Naive thymus-derived CD4-positive, alpha-beta T cell (primary cell): ENCODE measurements at regions of chr12 and their contacts with region 1.

Region 1: GRCh38 chr12:110449799-110450497 is at the start of gene ARPC3:
- DNase-seq: peak; percentile 86 to 95 (median 94)
- ATAC-seq: peak; percentile 98
- H3K4me3 ChIP-seq: peak within 1 kb of the TSS; percentile 95
- H3K4me3 Mint-ChIP-seq: peak within 1 kb of the TSS; percentile 90 to 100 (median 99)
- H3K27ac ChIP-seq: peak within 1 kb of the TSS; percentile 93
- H3K27ac Mint-ChIP-seq: peak within 1 kb of the TSS; percentile 94 to 100 (median 99)
- H3K4me1 ChIP-seq: peaks cover 20 to 22% of the 10 kb centered on the region in 2 donors
- H3K4me1 Mint-ChIP-seq: peaks cover 31 to 51% (median 44%) of the 10 kb centered on the region in 7 donors
- H3K27me3 ChIP-seq: no peaks in the 10 kb centered on the region
- H3K27me3 Mint-ChIP-seq: peaks cover 0 to 3% (median 0%) of the 10 kb centered on the region in 5 donors
- total RNA-seq, gene ARPC3: 166 to 381 (median 187) TPM

Region 2: GRCh38 chr12:109713187-109713984 is 736.6 kb before region 1 on chr12 and contains the start of gene FAM222A:
- CTCF ChIA-PET with region 1: no interaction called
- POLR2A ChIA-PET with region 1: no interaction called
- intact Hi-C with region 1: loop called in 1 of 2 experiments (anchors 5 kb)
- DNase-seq: peak; percentile 94 to 99 (median 98)
- ATAC-seq: peak; percentile 94
- H3K4me3 ChIP-seq: peak within 1 kb of the TSS; percentile 41
- H3K4me3 Mint-ChIP-seq: peak within 1 kb of the TSS; percentile 57 to 81 (median 72)
- H3K27ac ChIP-seq: peak within 1 kb of the TSS; percentile 55
- H3K27ac Mint-ChIP-seq: peak within 1 kb of the TSS in 1 of 9 donors; percentile 48
- H3K4me1 ChIP-seq: peaks cover 3 to 11% of the 10 kb centered on the region in 2 donors
- H3K4me1 Mint-ChIP-seq: peaks cover 0 to 4% (median 0%) of the 10 kb centered on the region in 7 donors
- H3K27me3 ChIP-seq: peaks cover 0 to 6% of the 10 kb centered on the region in 2 donors
- H3K27me3 Mint-ChIP-seq: peaks cover 29 to 65% (median 30%) of the 10 kb centered on the region in 5 donors
- total RNA-seq, gene FAM222A: 0.24 to 1.6 (median 0.80) TPM

Region 3: GRCh38 chr12:110088936-110089335 is 361.0 kb before region 1 on chr12:
- CTCF ChIA-PET with region 1: no interaction called
- POLR2A ChIA-PET with region 1: no interaction called
- intact Hi-C with region 1: no loop called
- DNase-seq: no peak
- ATAC-seq: peak; percentile 63
- H3K4me3 ChIP-seq: no peak overlapping the region
- H3K4me3 Mint-ChIP-seq: no peak overlapping the region
- H3K27ac ChIP-seq: no peak overlapping the region
- H3K27ac Mint-ChIP-seq: no peak overlapping the region
- H3K4me1 ChIP-seq: no peaks in the 10 kb centered on the region
- H3K4me1 Mint-ChIP-seq: peaks cover 0 to 9% (median 0%) of the 10 kb centered on the region in 7 donors
- H3K27me3 ChIP-seq: no peaks in the 10 kb centered on the region
- H3K27me3 Mint-ChIP-seq: peaks cover 0 to 63% (median 6%) of the 10 kb centered on the region in 5 donors

Region 4: DNA sequence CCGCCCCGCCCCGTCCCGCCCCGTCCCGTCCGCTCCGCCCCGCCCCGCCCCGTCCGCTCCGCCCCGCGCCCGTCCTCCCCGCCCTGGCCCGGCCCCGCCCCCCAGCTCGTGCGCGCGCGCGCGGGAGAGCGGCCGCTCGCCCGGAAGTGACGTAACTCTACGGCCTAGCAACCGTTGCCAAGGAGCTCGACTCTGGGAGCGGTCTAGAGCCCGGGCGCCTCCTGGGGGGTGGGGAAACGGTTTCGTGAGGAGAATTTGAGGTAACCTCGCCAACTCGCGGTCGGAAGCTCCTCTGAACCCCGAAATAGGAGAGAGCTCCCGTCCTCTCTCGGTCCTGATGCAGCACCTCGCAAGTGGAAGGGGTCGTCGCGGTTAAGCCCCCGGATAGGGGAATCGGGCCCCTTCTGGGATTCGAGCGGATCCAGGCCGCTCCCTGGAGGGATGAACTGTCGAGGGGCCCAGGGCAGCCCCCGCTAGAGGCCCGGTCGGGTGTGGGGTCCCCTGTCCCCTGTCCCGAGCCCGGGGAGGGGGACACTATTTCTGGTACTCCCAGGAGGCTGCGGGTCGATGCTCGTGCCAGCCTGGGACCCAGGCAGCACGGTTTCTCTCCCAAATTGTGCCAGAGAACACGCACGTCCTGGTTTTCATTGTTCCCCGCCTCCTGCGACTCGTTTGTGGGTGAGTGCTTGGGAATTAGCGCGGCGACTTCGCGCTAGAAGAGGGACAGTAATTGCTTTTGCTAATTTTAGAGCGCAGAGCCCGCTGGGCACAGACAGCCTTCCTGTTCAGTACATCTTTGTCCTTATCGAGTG is 325.6 kb before region 1 on chr12 and contains the start of gene IFT81:
- CTCF ChIA-PET with region 1: no interaction called
- POLR2A ChIA-PET with region 1: interaction called, 5 read pairs
- intact Hi-C with region 1: loop called in 1 of 2 experiments (anchors 1 kb)
- DNase-seq: peak; percentile 84 to 98 (median 93)
- ATAC-seq: peak; percentile 98
- H3K4me3 ChIP-seq: peak within 1 kb of the TSS; percentile 99
- H3K4me3 Mint-ChIP-seq: peak within 1 kb of the TSS; percentile 83 to 94 (median 92)
- H3K27ac ChIP-seq: peak within 1 kb of the TSS; percentile 84
- H3K27ac Mint-ChIP-seq: peak within 1 kb of the TSS; percentile 56 to 94 (median 90)
- H3K4me1 ChIP-seq: peaks cover 4 to 5% of the 10 kb centered on the region in 2 donors
- H3K4me1 Mint-ChIP-seq: peaks cover 0 to 9% (median 8%) of the 10 kb centered on the region in 7 donors
- H3K27me3 ChIP-seq: no peaks in the 10 kb centered on the region
- H3K27me3 Mint-ChIP-seq: peaks cover 0 to 52% (median 0%) of the 10 kb centered on the region in 5 donors
- total RNA-seq, gene IFT81: 0.66 to 1.3 (median 1.3) TPM

Region 5: DNA sequence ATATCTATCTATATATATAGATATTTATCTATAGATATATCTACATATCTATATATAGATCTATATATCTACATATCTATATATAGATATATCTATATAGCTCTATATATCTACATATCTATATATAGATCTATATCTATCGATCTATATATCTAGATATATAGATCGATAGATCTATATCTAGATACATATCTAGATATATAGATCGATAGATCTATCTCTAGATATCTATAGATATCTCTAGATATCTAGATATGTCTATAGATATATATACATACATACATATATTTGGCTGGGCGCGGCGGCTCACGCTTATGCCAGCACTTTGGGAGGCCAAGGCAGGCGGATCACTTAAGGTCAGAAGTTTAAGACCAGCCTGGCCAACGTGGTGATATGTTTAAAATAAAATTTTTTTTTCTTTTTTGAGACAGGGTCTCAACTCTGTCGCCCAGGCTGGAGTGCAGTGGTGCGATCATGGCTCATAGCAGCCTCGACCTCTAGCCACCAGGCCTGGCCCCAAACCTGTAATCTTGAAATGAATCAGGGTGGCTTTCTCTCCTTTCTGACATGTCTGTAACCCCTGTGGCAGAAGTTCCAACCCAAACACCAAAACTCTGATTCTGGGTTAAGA is 17.9 kb before region 1 on chr12:
- CTCF ChIA-PET with region 1: interaction called, 18 read pairs
- POLR2A ChIA-PET with region 1: interaction called, 17 read pairs
- intact Hi-C with region 1: loop called in 1 of 2 experiments (anchors 1 kb)
- DNase-seq: no peak
- ATAC-seq: no peak
- H3K4me3 ChIP-seq: no peak overlapping the region
- H3K4me3 Mint-ChIP-seq: peak overlapping the region in 4 of 10 donors; percentile 91 to 100 (median 96)
- H3K27ac ChIP-seq: no peak overlapping the region
- H3K27ac Mint-ChIP-seq: peak overlapping the region in 3 of 9 donors; percentile 96 to 99 (median 98)
- H3K4me1 ChIP-seq: no peaks in the 10 kb centered on the region
- H3K4me1 Mint-ChIP-seq: peaks cover 0 to 5% (median 0%) of the 10 kb centered on the region in 7 donors
- H3K27me3 ChIP-seq: no peaks in the 10 kb centered on the region
- H3K27me3 Mint-ChIP-seq: peaks cover 0 to 3% (median 0%) of the 10 kb centered on the region in 5 donors

Region 6: GRCh38 chr12:110555577-110556406 is 105.8 kb after region 1 on chr12:
- CTCF ChIA-PET with region 1: interaction called, 3 read pairs
- POLR2A ChIA-PET with region 1: no interaction called
- intact Hi-C with region 1: loop called in 1 of 2 experiments (anchors 2 kb)
- DNase-seq: no peak
- ATAC-seq: no peak
- H3K4me3 ChIP-seq: no peak overlapping the region
- H3K4me3 Mint-ChIP-seq: peak overlapping the region in 3 of 10 donors; percentile 5 to 49 (median 18)
- H3K27ac ChIP-seq: no peak overlapping the region
- H3K27ac Mint-ChIP-seq: peak overlapping the region in 6 of 9 donors; percentile 1 to 77 (median 43)
- H3K4me1 ChIP-seq: peaks cover 0 to 18% of the 10 kb centered on the region in 2 donors
- H3K4me1 Mint-ChIP-seq: peaks cover 32 to 75% (median 63%) of the 10 kb centered on the region in 7 donors
- H3K27me3 ChIP-seq: no peaks in the 10 kb centered on the region
- H3K27me3 Mint-ChIP-seq: no peaks in the 10 kb centered on the region

Region 7: DNA sequence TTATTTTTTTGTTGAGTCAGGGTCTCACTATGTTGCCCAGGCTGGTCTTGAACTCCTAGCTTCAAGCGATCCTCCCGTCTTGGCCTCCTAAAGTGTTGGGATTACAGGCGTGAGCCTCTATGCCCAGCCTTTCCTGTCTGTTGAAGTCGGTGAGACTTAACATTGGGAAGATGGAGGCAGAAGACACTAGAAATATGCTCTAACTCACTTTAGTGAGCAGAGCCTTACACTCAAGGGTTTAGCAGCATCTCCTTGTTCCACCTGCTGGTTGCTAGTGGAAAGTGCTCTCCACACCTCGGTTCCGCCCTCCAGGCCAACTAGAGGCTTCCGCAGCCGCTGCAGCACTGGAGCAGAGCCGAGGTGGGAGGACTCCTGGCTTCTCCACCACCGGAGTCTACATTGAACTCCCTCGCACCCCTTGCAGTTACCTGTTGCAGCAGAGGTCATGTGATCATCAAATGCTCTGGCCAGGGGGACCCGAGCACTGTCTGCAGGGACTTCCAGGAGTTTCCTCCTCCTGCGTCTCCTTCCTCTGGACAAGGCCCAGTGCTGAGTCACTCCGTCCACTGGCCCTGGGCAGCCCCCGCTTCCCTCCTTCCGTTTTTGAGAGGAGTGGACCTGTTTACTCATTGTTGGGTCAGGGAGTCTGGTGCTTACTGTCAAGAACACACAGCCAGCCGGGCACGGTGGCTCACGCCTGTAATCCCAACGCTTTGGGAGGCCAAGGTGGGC is 248.4 kb after region 1 on chr12:
- CTCF ChIA-PET with region 1: no interaction called
- POLR2A ChIA-PET with region 1: no interaction called
- intact Hi-C with region 1: loop called (anchors 1 kb)
- DNase-seq: peak; percentile 51 to 87 (median 77)
- ATAC-seq: peak; percentile 96
- H3K4me3 ChIP-seq: no peak overlapping the region
- H3K4me3 Mint-ChIP-seq: peak overlapping the region in 4 of 10 donors; percentile 14 to 69 (median 34)
- H3K27ac ChIP-seq: no peak overlapping the region
- H3K27ac Mint-ChIP-seq: peak overlapping the region in 6 of 9 donors; percentile 49 to 88 (median 74)
- H3K4me1 ChIP-seq: peaks cover 7 to 10% of the 10 kb centered on the region in 2 donors
- H3K4me1 Mint-ChIP-seq: peaks cover 5 to 25% (median 18%) of the 10 kb centered on the region in 7 donors
- H3K27me3 ChIP-seq: no peaks in the 10 kb centered on the region
- H3K27me3 Mint-ChIP-seq: no peaks in the 10 kb centered on the region

Region 8: DNA sequence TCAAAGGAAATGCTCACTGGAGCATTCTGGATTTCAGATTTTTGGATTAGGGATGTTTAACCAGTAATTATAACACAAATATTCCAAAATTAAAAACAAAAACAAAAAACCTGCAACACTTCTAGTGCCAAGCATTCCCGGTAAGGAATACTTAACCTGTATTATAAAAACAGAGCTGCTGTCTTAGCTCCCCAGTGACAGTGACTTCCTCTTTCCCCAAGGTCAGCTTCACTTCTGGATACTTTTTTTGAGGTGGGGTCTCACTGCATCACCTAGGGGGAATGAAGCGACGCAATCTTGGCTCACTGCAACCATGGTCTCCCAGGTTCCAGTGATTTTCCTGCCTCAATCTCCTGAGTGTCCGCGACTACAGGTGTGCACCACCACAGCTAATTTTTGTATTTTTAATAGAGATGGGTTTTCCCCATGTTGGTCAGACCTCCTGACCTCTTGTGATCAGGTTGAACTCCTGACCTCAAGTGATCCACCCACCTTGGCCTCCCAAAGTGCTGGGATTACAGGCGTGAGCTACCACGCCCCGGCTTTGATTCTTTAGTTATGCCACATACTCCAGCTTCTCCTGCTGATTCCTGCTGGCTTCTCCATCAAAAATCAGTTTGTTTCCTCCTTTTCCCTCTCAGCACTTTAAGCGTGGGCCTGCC is 276.9 kb after region 1 on chr12:
- CTCF ChIA-PET with region 1: no interaction called
- POLR2A ChIA-PET with region 1: no interaction called
- intact Hi-C with region 1: no loop called
- DNase-seq: no peak
- ATAC-seq: no peak
- H3K4me3 ChIP-seq: no peak overlapping the region
- H3K4me3 Mint-ChIP-seq: peak overlapping the region in 1 of 10 donors; percentile 3
- H3K27ac ChIP-seq: no peak overlapping the region
- H3K27ac Mint-ChIP-seq: peak overlapping the region; percentile 12 to 84 (median 36)
- H3K4me1 ChIP-seq: peaks cover 0 to 7% of the 10 kb centered on the region in 2 donors
- H3K4me1 Mint-ChIP-seq: peaks cover 15 to 51% (median 46%) of the 10 kb centered on the region in 7 donors
- H3K27me3 ChIP-seq: no peaks in the 10 kb centered on the region
- H3K27me3 Mint-ChIP-seq: no peaks in the 10 kb centered on the region

Region 9: DNA sequence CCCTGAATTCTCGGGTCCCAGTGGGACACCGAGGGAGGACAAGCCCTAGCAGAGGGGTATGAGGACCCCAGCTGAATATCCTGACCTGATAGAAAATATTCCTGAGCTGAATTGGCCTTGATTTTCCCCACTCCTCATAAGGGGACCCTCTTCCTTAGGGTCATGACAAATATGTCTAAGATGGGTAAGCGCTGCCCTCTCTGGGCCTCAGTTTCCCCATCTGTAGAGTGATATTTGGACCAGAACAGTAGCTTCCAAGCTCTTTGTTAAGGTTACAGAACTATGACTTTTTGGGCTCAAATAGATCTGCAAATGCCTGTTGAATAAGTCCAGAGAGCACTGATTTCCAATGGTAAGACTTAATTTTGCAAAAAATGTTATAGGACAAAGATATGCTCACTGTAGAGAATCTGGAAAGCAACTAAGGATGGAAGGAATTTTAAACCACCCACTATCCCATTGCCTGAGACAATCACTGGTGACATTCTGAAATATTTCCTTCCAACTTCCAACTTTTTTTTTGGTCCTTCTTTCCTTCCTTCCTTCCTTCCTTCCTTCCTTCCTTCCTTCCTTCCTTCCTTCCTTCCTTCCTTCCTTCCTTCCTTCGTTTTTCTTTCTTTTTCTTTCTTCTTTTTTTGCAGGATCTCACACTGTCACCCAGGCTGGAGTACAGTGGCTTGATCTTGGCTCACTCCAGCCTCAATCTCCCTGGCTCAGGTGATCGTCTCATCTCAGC is 438.5 kb after region 1 on chr12:
- CTCF ChIA-PET with region 1: interaction called, 4 read pairs
- POLR2A ChIA-PET with region 1: interaction called, 5 read pairs
- intact Hi-C with region 1: loop called (anchors 1 to 5 kb)
- DNase-seq: no peak
- ATAC-seq: no peak
- H3K4me3 ChIP-seq: no peak overlapping the region
- H3K4me3 Mint-ChIP-seq: peak overlapping the region; percentile 51 to 97 (median 92)
- H3K27ac ChIP-seq: no peak overlapping the region
- H3K27ac Mint-ChIP-seq: peak overlapping the region in 5 of 9 donors; percentile 69 to 91 (median 77)
- H3K4me1 ChIP-seq: peaks cover 0 to 4% of the 10 kb centered on the region in 2 donors
- H3K4me1 Mint-ChIP-seq: peaks cover 0 to 8% (median 4%) of the 10 kb centered on the region in 7 donors
- H3K27me3 ChIP-seq: no peaks in the 10 kb centered on the region
- H3K27me3 Mint-ChIP-seq: peaks cover 0 to 12% (median 0%) of the 10 kb centered on the region in 5 donors

Region 10: GRCh38 chr12:111211910-111212757 is 762.2 kb after region 1 on chr12:
- CTCF ChIA-PET with region 1: no interaction called
- POLR2A ChIA-PET with region 1: no interaction called
- intact Hi-C with region 1: no loop called
- DNase-seq: peak in 2 of 9 donors; percentile 4 to 6
- ATAC-seq: no peak
- H3K4me3 ChIP-seq: no peak overlapping the region
- H3K4me3 Mint-ChIP-seq: no peak overlapping the region
- H3K27ac ChIP-seq: no peak overlapping the region
- H3K27ac Mint-ChIP-seq: no peak overlapping the region
- H3K4me1 ChIP-seq: no peaks in the 10 kb centered on the region
- H3K4me1 Mint-ChIP-seq: no peaks in the 10 kb centered on the region
- H3K27me3 ChIP-seq: peaks cover 0 to 2% of the 10 kb centered on the region in 2 donors
- H3K27me3 Mint-ChIP-seq: peaks cover 0 to 17% (median 10%) of the 10 kb centered on the region in 5 donors